GM18951 (cell line): ENCODE measurements at regions of chr16 and their contacts with region 1.

Region 1: GRCh38 chr16:10964039-10964890 is 19.9 kb downstream of the CLEC16A start:
- POLR2A ChIP-seq: no peak

Region 2: GRCh38 chr16:11224894-11225676 is 260.8 kb after region 1 on chr16:
- in situ Hi-C with region 1: loop called (anchors 25 kb)
- POLR2A ChIP-seq: peak; percentile 42

Region 3: GRCh38 chr16:11255737-11256660 is 291.7 kb after region 1 on chr16 and contains the start of gene SOCS1:
- in situ Hi-C with region 1: no loop called
- POLR2A ChIP-seq: peak; percentile 99

Region 4: GRCh38 chr16:11354733-11355574 is 390.7 kb after region 1 on chr16:
- in situ Hi-C with region 1: no loop called
- POLR2A ChIP-seq: no peak

Region 5: GRCh38 chr16:11379420-11379819 is 415.2 kb after region 1 on chr16:
- in situ Hi-C with region 1: loop called (anchors 10 kb)
- POLR2A ChIP-seq: no peak

Region 6: DNA sequence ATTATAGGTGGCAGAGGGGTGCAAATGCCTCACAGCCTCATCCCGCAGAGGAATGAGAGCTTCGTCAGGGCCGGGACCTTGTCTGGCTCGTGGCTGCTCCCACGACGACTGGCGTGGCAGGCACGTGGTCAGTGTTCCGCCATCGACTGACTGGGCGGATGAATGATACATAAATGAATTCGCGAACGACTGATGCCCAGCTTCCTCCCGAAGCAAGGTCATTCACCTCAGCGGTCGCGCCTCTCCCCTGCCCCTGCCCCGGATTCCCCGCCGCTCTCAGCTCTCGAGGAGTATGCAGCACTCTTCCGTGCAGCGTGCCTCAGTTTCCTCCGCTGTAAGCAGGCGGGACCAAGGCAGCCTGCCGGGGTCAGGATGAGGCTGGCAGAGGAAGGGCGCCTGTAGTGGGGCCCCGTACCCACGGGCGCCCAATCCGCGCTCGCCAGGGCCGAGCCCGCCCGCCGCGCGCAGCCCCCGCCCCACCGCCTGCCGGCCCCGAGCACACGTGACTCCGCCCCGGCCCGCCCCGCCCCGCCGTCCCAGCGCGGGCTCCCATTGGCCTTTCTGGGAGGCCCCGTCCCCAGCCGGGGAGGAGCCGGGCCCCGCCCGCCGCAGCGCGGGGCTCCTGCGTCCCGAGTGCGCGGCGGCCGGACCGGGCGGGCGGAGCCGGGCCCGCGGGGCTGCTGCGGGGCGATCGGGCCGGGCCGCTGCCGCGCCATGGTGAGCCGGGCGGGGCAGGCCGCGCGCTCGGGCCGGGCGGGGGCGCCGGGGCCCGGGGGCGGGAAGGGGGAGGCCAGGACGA is 703.8 kb after region 1 on chr16 and contains the start of gene SNN:
- in situ Hi-C with region 1: loop called (anchors 25 kb)
- POLR2A ChIP-seq: peak; percentile 74

Region 7: GRCh38 chr16:11799509-11800381 is 835.5 kb after region 1 on chr16:
- in situ Hi-C with region 1: loop called (anchors 25 kb)
- POLR2A ChIP-seq: no peak